GM12878 (cell line): ENCODE measurements at regions of chr21 and their contacts with region 1.

Region 1: GRCh38 chr21:14454016-14455009 is 71.4 kb upstream of the HSPA13 start:
- DNase-seq: peak; percentile 69
- ATAC-seq: peak; percentile 82
- H3K4me3 ChIP-seq: 0 out of 2 replicates have a peak overlapping the region, but pooled peaks have one; percentile 13
- H3K27ac ChIP-seq: peak overlapping the region; percentile 96
- H3K4me1 ChIP-seq: peaks cover 34% of the 10 kb centered on the region
- H3K27me3 ChIP-seq: no peaks in the 10 kb centered on the region
- CTCF ChIP-seq: no peak
- EP300 ChIP-seq: peak in 1 of 2 experiments; percentile 35; a peak in 2 of 4 replicates
- POLR2A ChIP-seq: 0 out of 2 replicates have a peak, but pooled peaks have one; percentile 20
- RAD21 ChIP-seq: no peak

Region 2: GRCh38 chr21:14466715-14467114 is 12.4 kb after region 1 on chr21:
- CTCF ChIA-PET with region 1: interaction called, 4 read pairs
- POLR2A ChIA-PET with region 1: interaction called, 4 read pairs
- RAD21 ChIA-PET with region 1: interaction called, 3 read pairs
- SMC1A ChIA-PET with region 1: interaction called, 11 read pairs
- in situ Hi-C with region 1: no loop called
- intact Hi-C with region 1: no loop called
- DNase-seq: no peak
- ATAC-seq: no peak
- H3K4me3 ChIP-seq: no peak overlapping the region
- H3K27ac ChIP-seq: no peak overlapping the region
- H3K4me1 ChIP-seq: no peaks in the 10 kb centered on the region
- H3K27me3 ChIP-seq: no peaks in the 10 kb centered on the region
- CTCF ChIP-seq: no peak
- EP300 ChIP-seq: no peak
- POLR2A ChIP-seq: no peak
- RAD21 ChIP-seq: no peak

Region 3: DNA sequence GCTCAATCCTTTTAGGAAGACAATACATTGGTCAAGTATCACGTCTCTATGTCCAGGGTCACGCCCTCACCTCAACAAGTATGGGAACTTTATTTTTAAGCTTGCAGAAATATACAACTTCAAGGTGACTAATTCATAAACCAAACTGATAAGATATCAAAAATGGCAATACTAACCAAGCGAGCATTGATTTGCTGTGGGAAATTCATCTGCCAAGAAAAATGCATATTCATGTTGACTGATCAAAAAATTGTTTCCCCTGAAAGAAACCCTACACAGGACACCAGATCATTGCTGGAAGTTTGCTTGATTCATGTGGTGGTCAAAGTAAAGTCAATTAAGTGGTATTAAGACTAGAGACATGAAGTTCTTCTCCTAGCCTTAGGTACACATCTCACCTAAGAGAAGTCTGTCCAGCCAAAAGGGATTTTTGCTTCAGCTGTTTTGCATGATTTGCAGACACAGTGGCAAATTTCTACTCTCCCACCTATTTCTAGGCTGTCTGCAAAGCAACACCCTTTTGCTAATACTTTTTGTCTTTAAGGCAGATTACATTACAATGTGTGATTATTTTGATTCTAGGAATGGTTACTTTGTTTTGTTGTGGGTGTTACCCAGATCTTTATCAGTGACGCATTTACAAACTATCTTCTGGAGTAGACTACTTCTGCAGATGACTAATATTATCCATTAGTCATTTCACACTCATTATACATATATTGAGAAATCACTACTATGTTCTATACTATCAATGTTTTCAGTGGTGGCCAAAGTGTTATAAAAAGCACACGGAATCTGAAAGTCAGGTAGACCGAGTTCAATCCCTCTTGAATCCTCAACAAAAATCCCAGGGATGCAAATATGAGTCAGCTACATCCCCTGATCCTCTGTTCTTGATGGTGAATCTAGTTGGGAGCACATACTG is 79.5 kb after region 1 on chr21:
- CTCF ChIA-PET with region 1: interaction called, 5 read pairs
- POLR2A ChIA-PET with region 1: interaction called, 6 read pairs
- RAD21 ChIA-PET with region 1: interaction called, 60 read pairs
- SMC1A ChIA-PET with region 1: interaction called, 100 read pairs
- in situ Hi-C with region 1: loop called (anchors 5 kb)
- intact Hi-C with region 1: loop called (anchors 1 kb)
- DNase-seq: peak; percentile 56
- ATAC-seq: peak; percentile 89
- H3K4me3 ChIP-seq: peak overlapping the region; percentile 61; the same call in 1 of the 2 replicates
- H3K27ac ChIP-seq: peak overlapping the region; percentile 78
- H3K4me1 ChIP-seq: peaks cover 15% of the 10 kb centered on the region; the same call in 1 of the 2 replicates
- H3K27me3 ChIP-seq: no peaks in the 10 kb centered on the region
- CTCF ChIP-seq: no peak
- EP300 ChIP-seq: peak; percentile 92 to 97
- POLR2A ChIP-seq: no peak
- RAD21 ChIP-seq: no peak

Region 4: DNA sequence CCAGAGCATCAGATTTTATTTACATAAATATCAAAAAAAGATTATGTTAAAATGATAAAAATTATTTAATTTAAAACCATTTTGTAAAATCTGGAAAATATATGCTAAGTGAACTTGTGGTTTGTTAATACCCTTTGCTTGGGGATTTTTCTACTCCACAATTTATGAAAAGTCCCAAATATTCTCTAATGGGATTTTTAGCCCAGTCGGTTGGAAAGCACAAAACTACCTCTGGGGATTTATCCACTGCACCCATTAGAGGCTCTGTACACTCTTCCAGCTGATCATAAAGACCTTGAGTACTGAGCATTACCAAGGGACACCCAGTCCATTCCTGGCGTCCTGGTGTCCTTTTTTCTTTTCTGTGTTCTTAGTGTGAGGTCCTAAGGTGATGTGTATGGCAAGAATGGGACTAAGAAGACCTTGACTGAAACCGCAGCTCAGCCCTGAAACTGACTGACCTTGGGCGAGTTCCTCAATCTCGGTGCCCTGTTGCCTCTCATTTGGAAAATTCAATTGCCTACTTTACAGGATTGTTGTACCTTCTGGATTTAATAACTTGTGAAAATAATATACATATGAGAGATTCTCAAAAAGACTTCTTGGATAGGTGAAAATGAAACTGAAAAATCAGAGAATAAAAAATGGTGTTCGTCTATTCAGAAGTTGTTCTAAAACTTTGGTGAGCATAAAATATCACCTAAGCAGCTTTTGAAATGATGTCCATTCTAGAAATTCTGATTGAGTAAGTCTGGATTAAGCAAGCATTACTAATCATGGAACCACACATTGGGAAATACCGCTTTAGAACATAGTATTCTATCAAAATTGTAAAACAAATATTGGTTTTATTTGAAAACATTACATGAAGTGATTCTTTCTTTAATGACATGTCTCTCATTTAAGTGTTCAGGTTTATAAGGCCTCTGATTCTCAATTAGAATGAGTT is 113.3 kb after region 1 on chr21:
- CTCF ChIA-PET with region 1: no interaction called
- POLR2A ChIA-PET with region 1: no interaction called
- RAD21 ChIA-PET with region 1: interaction called, 7 read pairs
- SMC1A ChIA-PET with region 1: interaction called, 38 read pairs
- in situ Hi-C with region 1: no loop called
- intact Hi-C with region 1: no loop called
- DNase-seq: no peak
- ATAC-seq: peak; percentile 81
- H3K4me3 ChIP-seq: peak overlapping the region; percentile 42
- H3K27ac ChIP-seq: peak overlapping the region; percentile 69
- H3K4me1 ChIP-seq: peaks cover 22% of the 10 kb centered on the region
- H3K27me3 ChIP-seq: no peaks in the 10 kb centered on the region
- CTCF ChIP-seq: no peak
- EP300 ChIP-seq: no peak
- POLR2A ChIP-seq: no peak
- RAD21 ChIP-seq: no peak

Region 5: GRCh38 chr21:14616303-14617039 is 162.2 kb after region 1 on chr21:
- CTCF ChIA-PET with region 1: no interaction called
- POLR2A ChIA-PET with region 1: no interaction called
- RAD21 ChIA-PET with region 1: interaction called, 4 read pairs
- SMC1A ChIA-PET with region 1: interaction called, 12 read pairs
- in situ Hi-C with region 1: no loop called
- intact Hi-C with region 1: no loop called
- DNase-seq: no peak
- ATAC-seq: no peak
- H3K4me3 ChIP-seq: no peak overlapping the region
- H3K27ac ChIP-seq: no peak overlapping the region
- H3K4me1 ChIP-seq: no peaks in the 10 kb centered on the region
- H3K27me3 ChIP-seq: no peaks in the 10 kb centered on the region
- CTCF ChIP-seq: no peak
- EP300 ChIP-seq: no peak
- POLR2A ChIP-seq: no peak
- RAD21 ChIP-seq: no peak

Region 6: DNA sequence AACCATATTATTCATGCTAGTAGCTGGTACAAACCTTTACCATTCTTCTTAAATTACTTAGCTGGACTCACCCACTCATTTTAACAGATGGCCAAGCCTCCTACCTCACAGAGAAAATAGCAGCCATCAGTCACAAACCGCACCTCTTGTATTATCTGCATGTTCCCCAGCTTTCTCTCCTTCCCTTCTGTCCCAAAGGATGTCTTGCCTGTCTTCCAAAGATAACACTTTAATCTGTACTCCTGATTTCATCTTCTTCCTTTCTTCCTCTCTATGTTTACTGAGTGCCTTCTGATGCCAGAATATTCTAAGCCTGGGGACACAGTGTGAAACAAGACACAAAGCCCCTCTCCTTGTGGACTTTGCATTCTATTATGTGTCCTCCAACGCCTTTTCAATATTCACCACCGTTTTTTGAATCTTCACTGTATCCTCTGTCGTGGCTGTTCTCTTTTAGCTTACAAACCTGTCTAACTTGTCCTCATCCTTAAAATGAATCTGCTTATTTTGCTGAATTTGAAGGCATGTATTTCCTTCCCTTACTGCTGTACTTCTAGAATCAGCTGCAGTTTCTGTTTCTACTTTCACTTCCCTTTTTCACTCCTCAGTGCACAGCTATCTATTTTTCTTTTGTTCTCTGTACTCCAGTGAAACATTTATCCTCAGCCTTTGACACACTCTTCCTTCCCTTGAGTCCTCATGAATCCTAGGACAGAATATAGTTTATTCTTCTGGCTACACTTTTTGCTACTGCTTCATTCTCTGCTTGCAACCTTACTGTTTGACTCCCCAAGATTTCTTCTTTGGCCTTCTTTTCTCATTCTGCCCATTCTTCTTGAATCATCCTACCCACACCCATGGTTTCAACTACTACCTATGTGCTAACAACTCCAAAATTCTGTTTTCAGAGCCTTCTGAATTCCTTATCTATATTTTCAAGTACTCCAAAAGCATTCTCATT is 308.7 kb after region 1 on chr21:
- CTCF ChIA-PET with region 1: interaction called, 5 read pairs
- POLR2A ChIA-PET with region 1: interaction called, 9 read pairs
- RAD21 ChIA-PET with region 1: interaction called, 23 read pairs
- SMC1A ChIA-PET with region 1: interaction called, 6 read pairs
- in situ Hi-C with region 1: no loop called
- intact Hi-C with region 1: loop called (anchors 5 kb)
- DNase-seq: peak; percentile 82
- ATAC-seq: peak; percentile 97
- H3K4me3 ChIP-seq: peak overlapping the region; percentile 59
- H3K27ac ChIP-seq: peak overlapping the region; percentile 87
- H3K4me1 ChIP-seq: peaks cover 10% of the 10 kb centered on the region
- H3K27me3 ChIP-seq: no peaks in the 10 kb centered on the region
- CTCF ChIP-seq: no peak
- EP300 ChIP-seq: peak; percentile 89 to 98
- POLR2A ChIP-seq: no peak
- RAD21 ChIP-seq: 0 out of 2 replicates have a peak, but pooled peaks have one; percentile 24

Region 7: GRCh38 chr21:14877570-14878228 is 423.4 kb after region 1 on chr21:
- CTCF ChIA-PET with region 1: no interaction called
- POLR2A ChIA-PET with region 1: no interaction called
- RAD21 ChIA-PET with region 1: interaction called, 9 read pairs
- SMC1A ChIA-PET with region 1: interaction called, 4 read pairs
- in situ Hi-C with region 1: no loop called
- intact Hi-C with region 1: loop called (anchors 1 kb)
- DNase-seq: no peak
- ATAC-seq: peak; percentile 61
- H3K4me3 ChIP-seq: 0 out of 2 replicates have a peak overlapping the region, but pooled peaks have one; percentile 31
- H3K27ac ChIP-seq: no peak overlapping the region
- H3K4me1 ChIP-seq: peaks cover 32% of the 10 kb centered on the region
- H3K27me3 ChIP-seq: no peaks in the 10 kb centered on the region
- CTCF ChIP-seq: no peak
- EP300 ChIP-seq: peak; percentile 67 to 80; a peak in 2 of 4 replicates
- POLR2A ChIP-seq: no peak
- RAD21 ChIP-seq: 0 out of 2 replicates have a peak, but pooled peaks have one; percentile 5

Region 8: GRCh38 chr21:15037095-15037899 is 583.0 kb after region 1 on chr21:
- CTCF ChIA-PET with region 1: no interaction called
- POLR2A ChIA-PET with region 1: no interaction called
- RAD21 ChIA-PET with region 1: no interaction called
- SMC1A ChIA-PET with region 1: no interaction called
- in situ Hi-C with region 1: no loop called
- intact Hi-C with region 1: no loop called
- DNase-seq: no peak
- ATAC-seq: no peak
- H3K4me3 ChIP-seq: no peak overlapping the region
- H3K27ac ChIP-seq: no peak overlapping the region
- H3K4me1 ChIP-seq: no peaks in the 10 kb centered on the region
- H3K27me3 ChIP-seq: no peaks in the 10 kb centered on the region
- CTCF ChIP-seq: no peak
- EP300 ChIP-seq: no peak
- POLR2A ChIP-seq: no peak
- RAD21 ChIP-seq: no peak